Left cardiac atrium (tissue), 4 donors: ENCODE measurements at regions of chr2 and their contacts with region 1.

Region 1: DNA sequence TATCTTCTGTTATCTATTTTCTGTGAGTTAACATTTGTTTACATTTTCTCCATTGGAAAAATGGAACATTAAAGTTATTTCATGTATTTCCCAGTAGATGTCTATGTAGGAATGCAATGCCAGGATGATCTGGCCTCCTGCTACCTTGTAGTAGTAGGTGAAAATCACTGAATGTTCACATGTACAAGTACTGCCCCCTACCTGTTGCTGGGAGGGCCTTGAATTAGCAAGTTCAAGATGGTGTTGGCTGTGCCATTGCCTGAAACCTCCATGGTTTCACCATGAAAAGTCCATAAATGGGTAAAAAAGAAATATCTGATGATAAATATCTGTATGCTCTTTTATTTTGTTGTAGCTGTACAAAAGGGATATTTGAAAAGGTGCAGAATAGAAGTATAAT is 30.7 kb downstream of the XRCC5 start:
- DNase-seq: no peak
- ATAC-seq: no peak

Region 2: GRCh38 chr2:216117561-216118340 is 22.1 kb before region 1 on chr2:
- intact Hi-C with region 1: loop called in 1 of 2 experiments (anchors 2 kb)
- DNase-seq: no peak
- ATAC-seq: no peak